Mammary epithelial cell (primary cell): ENCODE measurements at regions of chr12 and their contacts with region 1.

Region 1: GRCh38 chr12:39426636-39427245 is 16.2 kb downstream of the KIF21A start:
- DNase-seq: peak; percentile 98
- H3K4me3 ChIP-seq: no peak overlapping the region
- H3K27ac ChIP-seq: peak overlapping the region; percentile 70
- H3K4me1 ChIP-seq: peaks cover 16% of the 10 kb centered on the region
- H3K27me3 ChIP-seq: no peaks in the 10 kb centered on the region
- CTCF ChIP-seq: no peak

Region 2: DNA sequence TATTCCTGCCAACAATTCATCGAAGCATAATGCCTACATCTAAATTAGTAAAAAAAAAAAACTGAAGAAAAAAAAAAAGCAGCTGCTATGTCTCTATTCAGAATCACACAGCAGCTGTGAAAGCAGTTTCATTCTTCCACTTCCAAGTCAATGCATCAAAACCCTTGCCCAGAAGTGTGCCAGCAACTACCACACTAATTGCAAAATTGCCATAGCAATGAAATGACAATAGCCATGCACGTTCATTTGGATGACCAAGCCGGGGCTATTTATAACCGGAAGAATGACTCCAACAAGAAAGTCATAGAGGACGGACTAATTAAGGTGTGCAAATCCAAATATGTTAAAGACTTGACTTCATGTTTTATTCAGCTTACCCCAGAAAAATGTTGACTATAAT is 636.7 kb after region 1 on chr12:
- CTCF ChIA-PET with region 1: interaction called, 13 read pairs
- dilution Hi-C with region 1: no loop called
- in situ Hi-C with region 1: no loop called
- intact Hi-C with region 1: no loop called
- DNase-seq: peak; percentile 25
- H3K4me3 ChIP-seq: no peak overlapping the region
- H3K27ac ChIP-seq: peak overlapping the region; percentile 18
- H3K4me1 ChIP-seq: peaks cover 14% of the 10 kb centered on the region
- H3K27me3 ChIP-seq: no peaks in the 10 kb centered on the region
- CTCF ChIP-seq: no peak